Esophagus muscularis mucosa (tissue), 4 donors: ENCODE measurements at regions of chr1 and their contacts with region 1.

Region 1: DNA sequence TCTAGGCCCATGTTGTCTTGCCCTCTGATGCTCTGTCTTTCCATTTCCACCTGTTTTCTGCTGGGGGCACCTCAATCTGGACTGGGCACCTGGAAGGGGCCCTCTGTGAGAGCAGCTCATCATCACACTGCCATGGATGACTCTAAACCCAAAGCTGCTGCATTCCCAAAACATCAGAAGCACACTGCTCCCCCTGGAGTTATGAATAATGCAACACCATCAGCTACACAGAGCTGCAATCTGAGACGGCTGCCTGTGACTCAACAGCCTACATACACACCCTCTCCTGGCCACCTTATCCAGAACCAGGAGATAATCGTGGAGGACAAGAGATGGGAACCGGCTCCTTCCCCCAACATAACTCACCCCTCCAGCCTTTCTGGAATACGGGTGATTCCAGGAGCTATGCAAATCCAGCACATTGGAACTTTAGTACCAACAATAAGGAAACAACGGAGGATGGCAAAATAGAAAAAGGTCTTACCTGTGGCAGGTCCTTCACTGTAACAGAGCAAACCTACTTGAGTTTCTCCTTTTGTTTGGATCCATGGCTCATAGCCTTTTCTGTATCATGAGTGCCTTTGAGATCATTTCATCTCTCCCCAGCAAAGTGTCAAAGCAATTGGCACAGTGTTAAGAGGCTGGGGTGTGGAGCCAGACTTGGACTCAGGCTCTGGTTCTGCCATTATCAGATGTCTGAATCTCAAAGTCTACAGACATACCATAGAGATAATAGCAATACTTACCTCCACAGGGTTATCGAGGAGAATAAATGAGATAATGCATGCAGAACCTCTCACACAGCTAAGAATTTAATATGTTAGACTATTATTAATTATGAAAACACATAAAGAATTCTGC is 29.3 kb downstream of the AK2 start:
- DNase-seq: no peak
- H3K4me3 ChIP-seq: no peak overlapping the region
- H3K27ac ChIP-seq: peak overlapping the region in 1 of 4 donors; percentile 8
- H3K4me1 ChIP-seq: peaks cover 41 to 65% (median 43%) of the 10 kb centered on the region in 4 donors
- H3K27me3 ChIP-seq: no peaks in the 10 kb centered on the region
- CTCF ChIP-seq: peak; percentile 37 to 44 (median 40)
- EP300 ChIP-seq: no peak
- POLR2A ChIP-seq: no peak

Region 2: DNA sequence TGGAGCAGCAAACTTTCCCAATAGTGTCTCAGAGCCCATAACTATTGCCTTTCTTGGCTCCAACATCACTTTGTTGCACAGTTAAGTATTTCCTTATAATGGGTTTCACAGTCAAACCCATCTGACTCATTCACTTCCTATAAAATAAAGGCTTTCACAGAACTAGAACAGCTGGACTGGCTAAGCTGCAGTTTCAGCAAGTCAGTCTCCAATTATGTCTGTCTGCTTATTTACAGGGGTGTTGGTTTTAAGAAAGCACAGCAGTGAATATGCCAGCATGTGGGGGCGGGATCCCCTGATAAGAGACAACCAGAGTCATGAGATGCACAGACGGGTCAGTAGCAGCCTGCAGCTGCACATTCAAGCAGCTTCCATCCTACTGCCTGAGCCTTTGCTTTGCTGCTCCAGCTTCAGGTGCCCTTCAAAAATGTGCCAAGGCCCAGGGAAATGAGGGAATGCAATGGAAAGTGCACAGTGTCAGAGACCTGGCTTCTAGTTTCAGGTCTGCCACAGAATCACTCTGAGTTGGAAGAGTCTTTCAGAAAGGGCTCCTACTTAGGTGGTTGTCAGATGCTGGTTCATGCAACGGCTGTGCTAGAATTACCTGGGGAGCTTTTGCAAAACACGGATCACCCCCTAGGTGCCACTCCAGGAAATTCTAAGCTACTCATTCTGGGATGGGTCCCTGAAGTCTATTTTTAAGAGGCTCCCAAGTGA is 67.6 kb before region 1 on chr1:
- intact Hi-C with region 1: loop called (anchors 5 kb)
- DNase-seq: no peak
- H3K4me3 ChIP-seq: no peak overlapping the region
- H3K27ac ChIP-seq: peak overlapping the region in 1 of 4 donors; percentile 46
- H3K4me1 ChIP-seq: peaks cover 8 to 18% (median 16%) of the 10 kb centered on the region in 4 donors
- H3K27me3 ChIP-seq: no peaks in the 10 kb centered on the region
- CTCF ChIP-seq: no peak
- EP300 ChIP-seq: no peak
- POLR2A ChIP-seq: no peak

Region 3: GRCh38 chr1:32964461-32965250 is 42.8 kb before region 1 on chr1 and contains the start of gene RNF19B:
- intact Hi-C with region 1: loop called (anchors 5 kb)
- DNase-seq: peak; percentile 98
- H3K4me3 ChIP-seq: peak within 1 kb of the TSS; percentile 68 to 93 (median 87)
- H3K27ac ChIP-seq: peak within 1 kb of the TSS; percentile 93 to 96 (median 94)
- H3K4me1 ChIP-seq: peaks cover 20 to 61% (median 49%) of the 10 kb centered on the region in 4 donors
- H3K27me3 ChIP-seq: no peaks in the 10 kb centered on the region
- CTCF ChIP-seq: peak in 1 of 3 experiments; percentile 30
- EP300 ChIP-seq: no peak
- POLR2A ChIP-seq: peak; percentile 97
- total RNA-seq, gene RNF19B: 16.2 to 32.3 (median 22.7) TPM